ENCODE measurements at regions of chr7 and their contacts with region 1.

Region 1: DNA sequence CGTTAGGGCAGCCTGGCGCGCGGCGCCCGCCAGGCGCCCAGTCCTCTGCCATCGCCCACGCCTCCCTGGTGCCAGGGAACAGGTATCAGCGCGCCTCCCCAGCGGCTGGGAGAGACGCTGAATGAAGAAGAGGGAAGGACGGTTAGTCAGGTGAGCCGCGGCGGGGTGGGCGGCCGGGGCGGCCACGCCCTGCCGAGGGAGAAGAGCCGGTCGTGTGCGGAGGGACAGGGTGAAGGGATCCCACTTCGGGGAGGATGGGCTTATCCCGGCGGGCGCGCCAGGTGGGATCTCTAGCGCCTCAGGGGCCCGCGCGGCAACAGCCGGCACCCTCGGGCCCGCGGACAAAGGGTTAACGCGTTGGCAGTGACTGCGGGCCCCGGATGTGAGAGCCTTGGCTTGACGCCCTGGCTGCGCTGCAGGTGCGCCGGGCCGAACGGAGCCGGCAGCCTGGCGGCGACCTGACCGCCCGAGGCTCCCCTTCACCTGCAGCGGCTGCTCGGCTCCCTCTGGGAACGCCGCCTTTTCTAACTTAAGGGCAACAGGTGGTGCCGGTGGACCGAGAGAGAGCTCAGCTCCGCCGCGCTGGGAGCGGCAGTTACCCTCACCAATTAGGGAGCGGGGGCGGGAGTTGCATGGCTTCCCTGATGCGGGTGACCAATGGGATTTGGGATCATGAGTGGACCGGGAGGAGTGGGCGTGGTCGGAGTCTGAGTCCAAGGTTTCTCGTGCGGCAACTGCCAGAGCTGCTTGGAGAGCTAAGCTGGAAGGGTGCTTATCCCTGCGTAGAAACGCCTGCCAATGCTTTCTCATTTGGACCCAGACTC is at the start of gene ARL4A:
- DNase-seq: peak; percentile 99 to 100 (median 99)
- ATAC-seq: peak; percentile 98
- H3K4me3 ChIP-seq: peak within 1 kb of the TSS; percentile 70
- H3K27ac ChIP-seq: peak within 1 kb of the TSS; percentile 70
- H3K4me1 ChIP-seq: no peaks in the 10 kb centered on the region
- H3K27me3 ChIP-seq: no peaks in the 10 kb centered on the region
- total RNA-seq, gene ARL4A: 9.6 to 19.7 (median 12.6) TPM

Region 2: GRCh38 chr7:12403287-12404181 is 283.6 kb before region 1 on chr7 and contains the start of gene VWDE:
- intact Hi-C with region 1: no loop called
- DNase-seq: peak; percentile 33 to 71 (median 63)
- ATAC-seq: peak; percentile 89 to 93
- H3K4me3 ChIP-seq: peak within 1 kb of the TSS; percentile 65
- H3K27ac ChIP-seq: no peak within 1 kb of the TSS
- H3K4me1 ChIP-seq: no peaks in the 10 kb centered on the region
- H3K27me3 ChIP-seq: no peaks in the 10 kb centered on the region
- total RNA-seq, gene VWDE: 9.3 to 18.4 (median 11.7) TPM

Region 3: GRCh38 chr7:12469568-12469967 is 217.5 kb before region 1 on chr7:
- intact Hi-C with region 1: no loop called
- DNase-seq: no peak
- ATAC-seq: no peak
- H3K4me3 ChIP-seq: no peak overlapping the region
- H3K27ac ChIP-seq: no peak overlapping the region
- H3K4me1 ChIP-seq: no peaks in the 10 kb centered on the region
- H3K27me3 ChIP-seq: no peaks in the 10 kb centered on the region

Region 4: GRCh38 chr7:12609561-12609960 is 77.5 kb before region 1 on chr7:
- intact Hi-C with region 1: no loop called
- DNase-seq: no peak
- ATAC-seq: no peak
- H3K4me3 ChIP-seq: no peak overlapping the region
- H3K27ac ChIP-seq: no peak overlapping the region
- H3K4me1 ChIP-seq: no peaks in the 10 kb centered on the region
- H3K27me3 ChIP-seq: no peaks in the 10 kb centered on the region

Region 5: DNA sequence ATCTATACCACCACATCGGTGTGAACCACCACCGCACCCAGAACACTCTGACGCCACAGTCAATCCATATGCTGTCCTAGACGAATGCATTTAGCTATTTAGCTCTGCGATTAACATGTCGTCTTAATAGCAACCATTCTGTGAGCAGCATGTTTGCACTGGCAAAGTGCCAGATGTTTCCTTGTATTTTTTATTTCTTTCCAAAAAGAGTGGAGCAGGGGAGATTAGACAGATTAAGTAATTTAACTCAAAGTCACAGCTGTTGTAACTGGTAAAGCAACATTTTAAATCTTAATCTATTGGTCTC is 56.6 kb before region 1 on chr7:
- intact Hi-C with region 1: no loop called
- DNase-seq: no peak
- ATAC-seq: no peak
- H3K4me3 ChIP-seq: no peak overlapping the region
- H3K27ac ChIP-seq: no peak overlapping the region
- H3K4me1 ChIP-seq: no peaks in the 10 kb centered on the region
- H3K27me3 ChIP-seq: no peaks in the 10 kb centered on the region

Region 6: GRCh38 chr7:12719981-12720865 is 33.1 kb after region 1 on chr7:
- intact Hi-C with region 1: loop called in 1 of 4 experiments (anchors 5 kb)
- DNase-seq: no peak
- ATAC-seq: no peak
- H3K4me3 ChIP-seq: no peak overlapping the region
- H3K27ac ChIP-seq: peak overlapping the region; percentile 30
- H3K4me1 ChIP-seq: peaks cover 18% of the 10 kb centered on the region
- H3K27me3 ChIP-seq: no peaks in the 10 kb centered on the region

Region 7: DNA sequence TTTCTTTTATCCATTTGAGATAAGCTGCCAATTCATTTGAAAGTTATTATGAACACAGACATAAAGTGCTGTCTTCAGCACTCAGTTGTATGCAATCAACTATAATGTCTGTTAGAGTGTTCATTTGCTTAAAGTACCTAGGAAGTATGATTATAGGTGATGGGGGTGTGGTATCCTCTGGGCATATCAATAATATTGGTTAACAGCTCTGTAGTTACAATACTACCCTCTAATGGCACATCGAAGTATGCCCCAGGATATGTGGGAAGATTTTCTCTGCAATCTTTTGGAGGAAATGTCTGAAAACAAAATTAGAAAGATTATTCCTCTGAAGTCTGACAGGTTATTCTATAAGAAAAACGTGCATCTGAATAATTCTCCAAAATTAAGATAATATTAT is 430.0 kb after region 1 on chr7:
- intact Hi-C with region 1: loop called in 1 of 4 experiments (anchors 10 kb)
- DNase-seq: no peak
- ATAC-seq: no peak
- H3K4me3 ChIP-seq: no peak overlapping the region
- H3K27ac ChIP-seq: no peak overlapping the region
- H3K4me1 ChIP-seq: no peaks in the 10 kb centered on the region
- H3K27me3 ChIP-seq: no peaks in the 10 kb centered on the region

Region 8: GRCh38 chr7:13179102-13179501 is 492.0 kb after region 1 on chr7:
- intact Hi-C with region 1: loop called in 1 of 4 experiments (anchors 10 kb)
- DNase-seq: no peak
- ATAC-seq: peak; percentile 43 to 51
- H3K4me3 ChIP-seq: no peak overlapping the region
- H3K27ac ChIP-seq: no peak overlapping the region
- H3K4me1 ChIP-seq: no peaks in the 10 kb centered on the region
- H3K27me3 ChIP-seq: no peaks in the 10 kb centered on the region

Region 9: DNA sequence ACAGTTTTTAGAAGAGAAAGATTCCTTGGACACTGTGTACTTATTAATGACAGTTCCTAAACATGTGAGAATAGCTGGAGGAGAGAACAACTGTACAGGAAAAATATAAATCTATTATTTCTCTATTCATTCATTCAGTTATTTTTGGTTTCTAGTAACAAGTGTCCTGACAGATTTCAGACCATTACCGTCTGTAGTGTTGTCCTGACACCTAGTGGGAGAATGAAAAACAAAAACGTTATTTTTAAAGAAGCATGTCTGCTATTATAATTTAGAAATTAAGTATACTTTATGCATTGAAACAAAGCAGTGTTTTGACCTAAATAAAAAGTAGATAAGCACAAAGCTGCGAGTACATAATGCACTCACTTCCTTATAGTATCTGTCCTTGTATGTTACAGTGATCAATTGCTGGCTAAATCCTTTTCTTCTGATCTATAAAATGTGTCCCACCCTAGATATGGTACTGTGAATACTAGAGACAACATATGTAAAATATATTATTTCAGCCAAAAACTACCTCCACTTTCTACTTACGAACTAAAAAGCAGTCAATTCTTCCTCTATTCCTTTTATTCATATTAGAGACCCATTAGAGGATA is 575.9 kb after region 1 on chr7:
- intact Hi-C with region 1: loop called in 3 of 4 experiments (anchors 5 to 10 kb)
- DNase-seq: no peak
- ATAC-seq: peak; percentile 51 to 52
- H3K4me3 ChIP-seq: no peak overlapping the region
- H3K27ac ChIP-seq: no peak overlapping the region
- H3K4me1 ChIP-seq: no peaks in the 10 kb centered on the region
- H3K27me3 ChIP-seq: no peaks in the 10 kb centered on the region

Measured in right cardiac atrium (tissue), 5 donors.